ENCODE measurements at regions of chr16 and their contacts with region 1.

Region 1: GRCh38 chr16:21708533-21709115 is 44.9 kb downstream of the OTOA start:
- DNase-seq: peak; percentile 87
- ATAC-seq: peak; percentile 47
- H3K4me3 ChIP-seq: no peak overlapping the region
- H3K4me3 Mint-ChIP-seq: no peak overlapping the region
- H3K27ac ChIP-seq: no peak overlapping the region
- H3K27ac Mint-ChIP-seq: no peak overlapping the region
- H3K4me1 ChIP-seq: peaks cover 7 to 15% of the 10 kb centered on the region in 2 donors
- H3K4me1 Mint-ChIP-seq: peaks cover 9% of the 10 kb centered on the region
- H3K27me3 ChIP-seq: peaks cover 0 to 11% (median 5%) of the 10 kb centered on the region in 4 experiments
- H3K27me3 Mint-ChIP-seq: peaks cover 10% of the 10 kb centered on the region
- CTCF ChIP-seq: peak; percentile 91

Region 2: DNA sequence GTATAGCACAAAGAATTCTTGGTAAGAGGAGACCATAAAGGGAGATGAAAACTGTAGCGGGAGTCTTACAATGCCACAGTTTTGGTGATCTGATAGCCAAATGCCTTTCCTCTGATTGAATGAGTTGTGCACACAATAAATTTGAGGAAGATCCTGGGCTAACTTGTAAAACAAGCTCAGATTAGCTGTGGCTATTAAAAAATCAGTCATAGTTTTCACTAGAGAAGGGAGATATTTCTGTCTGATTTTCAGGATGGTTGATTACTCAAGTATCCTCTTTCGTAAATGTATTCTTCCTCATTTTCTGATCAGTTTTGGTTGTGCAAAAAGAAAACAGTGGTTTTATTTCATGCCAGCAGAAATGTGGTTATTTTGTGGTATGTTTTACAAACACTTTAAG is 118.3 kb before region 1 on chr16:
- CTCF ChIA-PET with region 1: interaction called, 129 read pairs
- POLR2A ChIA-PET with region 1: no interaction called
- intact Hi-C with region 1: no loop called
- DNase-seq: no peak
- ATAC-seq: no peak
- H3K4me3 ChIP-seq: peak overlapping the region in 1 of 5 experiments; percentile 11
- H3K4me3 Mint-ChIP-seq: no peak overlapping the region
- H3K27ac ChIP-seq: no peak overlapping the region
- H3K27ac Mint-ChIP-seq: peak overlapping the region; percentile 63
- H3K4me1 ChIP-seq: peaks cover 5 to 8% of the 10 kb centered on the region in 2 donors
- H3K4me1 Mint-ChIP-seq: peaks cover 14% of the 10 kb centered on the region
- H3K27me3 ChIP-seq: no peaks in the 10 kb centered on the region
- H3K27me3 Mint-ChIP-seq: peaks cover 4% of the 10 kb centered on the region
- CTCF ChIP-seq: no peak

Region 3: DNA sequence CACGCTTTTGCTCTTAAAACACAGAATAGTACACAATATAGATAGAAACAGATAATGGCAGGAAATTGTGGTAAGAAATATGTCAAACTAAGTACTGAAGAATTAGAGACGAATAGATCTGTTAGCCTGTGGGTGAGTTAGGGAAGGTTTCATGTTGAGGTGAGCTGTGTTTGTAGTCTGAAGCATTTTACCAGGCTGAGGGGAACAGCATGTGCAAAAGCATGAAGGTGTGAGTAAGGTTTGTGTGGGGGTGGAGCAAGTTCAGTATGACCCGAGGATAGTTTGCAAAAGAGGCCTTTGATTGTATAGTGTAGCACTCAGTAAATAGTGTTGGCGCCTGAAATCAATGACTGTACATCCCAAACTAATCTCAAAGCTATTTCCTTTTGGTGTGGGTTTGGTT is 70.0 kb before region 1 on chr16:
- CTCF ChIA-PET with region 1: interaction called, 52 read pairs
- POLR2A ChIA-PET with region 1: no interaction called
- intact Hi-C with region 1: no loop called
- DNase-seq: no peak
- ATAC-seq: no peak
- H3K4me3 ChIP-seq: no peak overlapping the region
- H3K4me3 Mint-ChIP-seq: no peak overlapping the region
- H3K27ac ChIP-seq: no peak overlapping the region
- H3K27ac Mint-ChIP-seq: no peak overlapping the region
- H3K4me1 ChIP-seq: peaks cover 0 to 8% of the 10 kb centered on the region in 2 donors
- H3K4me1 Mint-ChIP-seq: peaks cover 11% of the 10 kb centered on the region
- H3K27me3 ChIP-seq: no peaks in the 10 kb centered on the region
- H3K27me3 Mint-ChIP-seq: no peaks in the 10 kb centered on the region
- CTCF ChIP-seq: no peak

Region 4: DNA sequence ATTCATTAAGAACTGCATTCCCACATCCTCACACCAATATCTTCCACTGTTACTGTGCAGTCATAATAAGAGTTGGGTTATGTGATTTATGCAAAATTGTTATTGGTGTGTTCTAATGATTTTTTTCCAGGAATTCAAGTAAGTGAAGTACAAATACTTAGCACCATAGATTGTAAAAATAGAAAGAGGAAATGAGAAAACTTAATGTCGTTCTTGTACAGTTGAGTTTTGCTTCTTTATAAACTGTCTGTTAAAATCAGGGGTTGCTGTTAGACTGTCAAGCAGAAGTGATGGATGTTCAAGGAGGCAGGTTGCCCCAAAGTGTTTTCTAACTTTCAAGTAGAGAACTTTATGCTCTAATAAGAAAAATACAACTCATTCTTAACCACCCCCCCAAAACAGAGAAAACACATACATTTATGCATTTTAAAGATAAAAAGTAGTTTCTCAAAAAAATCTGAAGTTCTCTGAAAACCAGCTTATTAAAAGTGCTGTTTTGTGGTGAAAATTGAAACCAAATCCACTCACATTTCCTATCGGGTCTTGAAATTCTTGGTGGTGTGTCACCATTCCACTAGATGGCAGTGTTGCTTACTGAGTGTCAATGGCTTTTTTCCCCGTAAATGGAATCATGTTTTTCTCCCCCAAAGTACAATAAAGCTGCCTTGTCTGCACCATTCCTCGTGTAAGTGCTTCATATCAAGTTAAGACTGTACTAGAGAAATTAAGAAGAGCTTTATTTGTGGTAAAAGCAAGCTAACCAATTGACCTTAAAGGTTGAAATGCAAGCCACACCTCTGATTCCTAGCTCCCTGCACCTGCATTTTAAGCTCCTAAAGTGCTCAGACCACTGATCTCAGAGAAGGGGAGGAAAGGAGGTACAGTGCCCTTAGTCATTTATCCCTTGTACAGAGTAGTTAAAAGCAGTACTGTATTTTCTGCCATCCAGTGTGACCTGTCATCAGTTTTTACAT is 51.5 kb before region 1 on chr16:
- CTCF ChIA-PET with region 1: interaction called, 92 read pairs
- POLR2A ChIA-PET with region 1: no interaction called
- intact Hi-C with region 1: loop called (anchors 1 kb)
- DNase-seq: peak; percentile 81
- ATAC-seq: peak; percentile 82
- H3K4me3 ChIP-seq: peak overlapping the region in 3 of 5 experiments; percentile 0 to 47 (median 44)
- H3K4me3 Mint-ChIP-seq: peak overlapping the region; percentile 79
- H3K27ac ChIP-seq: peak overlapping the region; percentile 51 to 78
- H3K27ac Mint-ChIP-seq: peak overlapping the region; percentile 88
- H3K4me1 ChIP-seq: peaks cover 74 to 77% of the 10 kb centered on the region in 2 donors
- H3K4me1 Mint-ChIP-seq: peaks cover 82% of the 10 kb centered on the region
- H3K27me3 ChIP-seq: no peaks in the 10 kb centered on the region
- H3K27me3 Mint-ChIP-seq: no peaks in the 10 kb centered on the region
- CTCF ChIP-seq: peak; percentile 92

Region 5: GRCh38 chr16:21673469-21673868 is 35.2 kb before region 1 on chr16:
- CTCF ChIA-PET with region 1: no interaction called
- POLR2A ChIA-PET with region 1: no interaction called
- intact Hi-C with region 1: no loop called
- DNase-seq: no peak
- ATAC-seq: no peak
- H3K4me3 ChIP-seq: no peak overlapping the region
- H3K4me3 Mint-ChIP-seq: no peak overlapping the region
- H3K27ac ChIP-seq: no peak overlapping the region
- H3K27ac Mint-ChIP-seq: no peak overlapping the region
- H3K4me1 ChIP-seq: no peaks in the 10 kb centered on the region
- H3K4me1 Mint-ChIP-seq: no peaks in the 10 kb centered on the region
- H3K27me3 ChIP-seq: no peaks in the 10 kb centered on the region
- H3K27me3 Mint-ChIP-seq: peaks cover 3% of the 10 kb centered on the region
- CTCF ChIP-seq: no peak